ENCODE measurements at regions of chr1 and their contacts with region 1.

Region 1: DNA sequence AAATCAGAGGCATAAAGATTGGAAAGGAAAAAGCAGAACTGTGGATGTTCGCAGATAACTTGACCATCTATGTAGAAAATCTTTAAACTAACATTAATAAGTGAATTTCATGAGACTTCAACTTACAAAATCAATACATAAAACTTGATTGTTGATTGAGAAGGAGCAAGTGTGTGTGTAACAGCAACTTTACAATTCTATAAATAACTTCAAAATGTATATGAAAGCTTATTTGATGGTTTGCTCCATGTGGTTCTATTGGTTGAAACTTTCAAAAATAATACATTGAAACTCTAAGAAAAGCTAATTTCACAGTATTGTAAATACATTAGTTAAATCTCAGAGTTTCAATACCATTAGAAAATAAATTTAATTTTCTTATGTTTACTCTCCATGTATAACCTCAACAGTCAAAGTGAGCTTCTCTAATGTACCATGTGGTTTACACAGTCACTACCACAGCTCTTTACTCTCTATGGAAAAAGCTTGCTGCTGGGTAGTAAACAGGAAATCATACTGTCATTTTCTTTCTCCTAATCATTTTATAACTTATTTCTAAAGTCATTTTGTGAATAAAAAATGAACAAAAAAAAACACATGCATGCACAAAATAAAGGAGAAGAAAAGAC is 12.0 kb downstream of the AKT3 start:
- DNase-seq: no peak
- H3K4me3 Mint-ChIP-seq: no peak overlapping the region
- H3K27ac Mint-ChIP-seq: peak overlapping the region; percentile 27
- H3K4me1 Mint-ChIP-seq: peaks cover 22% of the 10 kb centered on the region
- H3K27me3 Mint-ChIP-seq: no peaks in the 10 kb centered on the region

Region 2: GRCh38 chr1:243799908-243800307 is 38.1 kb before region 1 on chr1:
- intact Hi-C with region 1: loop called (anchors 5 kb)
- DNase-seq: no peak
- H3K4me3 Mint-ChIP-seq: no peak overlapping the region
- H3K27ac Mint-ChIP-seq: no peak overlapping the region
- H3K4me1 Mint-ChIP-seq: peaks cover 28% of the 10 kb centered on the region
- H3K27me3 Mint-ChIP-seq: no peaks in the 10 kb centered on the region

Region 3: DNA sequence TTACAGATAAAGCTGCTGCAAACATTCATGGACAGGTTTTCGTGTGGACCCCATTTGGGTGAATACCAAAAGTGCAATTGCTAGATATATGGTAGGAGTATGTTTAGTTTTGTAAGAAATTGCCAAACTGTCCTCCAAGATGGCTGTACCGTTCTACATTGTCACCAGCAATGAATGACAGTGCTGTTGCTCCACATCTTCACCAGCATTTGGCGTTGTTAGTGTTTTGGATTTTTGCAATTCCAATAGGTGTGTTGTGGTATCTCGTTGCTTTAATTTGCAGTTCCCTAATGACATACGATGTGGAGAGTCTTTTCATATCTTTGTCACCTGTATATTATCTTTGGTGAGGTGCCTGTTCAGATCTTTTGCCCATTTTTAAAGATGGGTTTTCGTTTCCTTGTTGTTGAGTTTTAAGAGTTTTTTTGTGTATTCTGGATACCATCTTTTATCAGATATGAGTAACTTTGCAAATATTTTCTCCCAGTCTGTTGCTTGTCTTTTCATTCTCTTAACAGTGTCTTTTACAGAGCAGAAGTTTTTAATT is 635.1 kb after region 1 on chr1:
- intact Hi-C with region 1: no loop called
- DNase-seq: no peak
- H3K4me3 Mint-ChIP-seq: no peak overlapping the region
- H3K27ac Mint-ChIP-seq: no peak overlapping the region
- H3K4me1 Mint-ChIP-seq: no peaks in the 10 kb centered on the region
- H3K27me3 Mint-ChIP-seq: peaks cover 5% of the 10 kb centered on the region

Measured in activated T-helper 2 cell treated with anti-CD3 and anti-CD28 coated beads, Interferon-gamma antibody, Interleukin-2, Interleukin-4, amounts not matched to agents 10 μg/mL and 5 μg/mL and 100 μg/mL, durations not matched to agents 14 hours and 24 hours and 36 hours (primary cell).